Heart left ventricle (tissue), 16 donors: ENCODE measurements at regions of chr4 and their contacts with region 1.

Region 1: GRCh38 chr4:7719354-7720174 is 220.1 kb downstream of the AFAP1 start:
- DNase-seq: peak; percentile 44 to 81 (median 59)
- ATAC-seq: peak; percentile 36 to 83 (median 62)
- H3K4me3 ChIP-seq: no peak overlapping the region
- H3K27ac ChIP-seq: no peak overlapping the region
- H3K4me1 ChIP-seq: peaks cover 0 to 6% (median under 1%) of the 10 kb centered on the region in 12 donors
- H3K27me3 ChIP-seq: peaks cover 0 to 13% (median 0%) of the 10 kb centered on the region in 9 donors
- CTCF ChIP-seq: peak; percentile 73 to 90 (median 84)
- POLR2A ChIP-seq: no peak

Region 2: DNA sequence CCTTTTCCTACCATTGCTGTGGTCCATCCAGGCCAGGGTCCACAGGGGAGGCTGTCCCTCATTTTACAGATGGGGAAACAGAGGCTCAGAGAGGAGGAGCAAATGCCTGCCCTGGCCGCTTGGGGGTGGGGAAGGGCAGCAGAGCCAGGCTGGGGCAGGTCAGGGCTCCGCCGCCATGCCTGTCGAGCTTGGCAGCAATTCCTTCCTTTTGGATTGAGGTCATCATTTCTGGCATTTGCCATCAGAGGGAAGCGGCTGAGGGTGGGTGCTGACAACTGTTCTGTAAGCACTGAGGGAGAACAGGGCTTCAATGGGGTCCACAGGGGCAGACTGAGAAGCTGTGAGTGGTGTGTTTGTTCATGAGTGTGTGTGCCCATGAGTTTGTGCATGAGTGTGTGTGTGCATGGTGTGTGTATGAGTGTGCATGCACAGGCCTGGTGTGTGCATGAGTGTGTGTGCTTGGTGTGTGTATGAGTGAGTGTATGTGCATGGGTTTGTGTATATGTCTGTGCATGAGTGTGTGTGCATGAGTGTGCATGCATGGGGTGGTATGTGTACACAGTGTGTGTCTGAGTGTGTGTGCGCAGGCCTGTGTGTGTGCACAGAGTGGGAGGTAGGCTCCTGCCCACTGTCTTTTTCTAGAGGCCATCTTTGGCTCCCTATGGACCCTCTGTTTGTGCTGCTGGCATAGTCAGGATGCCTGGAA is 412.0 kb before region 1 on chr4:
- intact Hi-C with region 1: loop called in 5 of 10 experiments (anchors 5 to 10 kb)
- DNase-seq: peak in 4 of 5 donors; percentile 29 to 60 (median 41)
- ATAC-seq: peak; percentile 59 to 76 (median 72)
- H3K4me3 ChIP-seq: no peak overlapping the region
- H3K27ac ChIP-seq: no peak overlapping the region
- H3K4me1 ChIP-seq: peaks cover 0 to 21% (median 4%) of the 10 kb centered on the region in 12 donors
- H3K27me3 ChIP-seq: no peaks in the 10 kb centered on the region
- CTCF ChIP-seq: peak in 8 of 12 donors; percentile 9 to 35 (median 22)
- POLR2A ChIP-seq: no peak

Region 3: DNA sequence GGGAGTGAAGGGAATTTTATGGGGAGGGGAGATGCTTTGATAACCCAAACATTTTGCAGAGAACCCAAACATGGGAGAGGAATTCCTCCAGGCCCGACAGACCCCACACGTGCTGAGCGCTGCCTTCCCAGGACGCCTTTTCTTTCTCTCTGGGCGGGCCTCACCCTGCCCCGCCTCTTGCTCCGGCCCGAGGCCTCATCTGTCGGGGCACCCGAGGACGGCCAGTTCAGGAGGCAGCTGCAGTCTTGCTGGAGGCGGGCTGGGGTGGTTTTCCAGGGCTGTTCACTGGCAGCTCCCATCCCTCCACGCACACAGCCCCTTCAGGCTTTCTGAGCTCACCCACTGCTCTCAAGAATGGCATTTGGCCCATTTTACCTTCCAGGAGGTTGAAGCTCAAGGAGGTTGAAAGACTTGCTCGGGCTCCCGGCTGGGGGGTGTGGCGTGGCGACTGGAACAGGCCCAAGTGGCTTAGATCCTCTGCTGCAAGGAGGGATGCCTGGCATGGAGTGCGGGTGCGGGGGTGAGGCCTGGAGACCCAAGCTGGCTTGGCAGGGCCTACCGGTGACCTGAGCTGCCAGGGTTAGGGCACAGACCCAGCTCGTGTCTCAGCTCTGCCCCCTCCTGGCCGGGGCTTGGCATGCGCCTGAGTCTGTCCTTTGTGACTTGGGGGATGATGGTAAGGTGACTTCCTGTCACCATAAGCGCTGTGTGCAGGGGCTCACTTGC is 384.1 kb before region 1 on chr4:
- intact Hi-C with region 1: loop called in 2 of 10 experiments (anchors 5 to 10 kb)
- DNase-seq: peak; percentile 46 to 76 (median 58)
- ATAC-seq: peak in 3 of 4 donors; percentile 52 to 63 (median 60)
- H3K4me3 ChIP-seq: no peak overlapping the region
- H3K27ac ChIP-seq: no peak overlapping the region
- H3K4me1 ChIP-seq: peaks cover 0 to 16% (median 0%) of the 10 kb centered on the region in 12 donors
- H3K27me3 ChIP-seq: no peaks in the 10 kb centered on the region
- CTCF ChIP-seq: peak; percentile 46 to 75 (median 58)
- POLR2A ChIP-seq: no peak

Region 4: DNA sequence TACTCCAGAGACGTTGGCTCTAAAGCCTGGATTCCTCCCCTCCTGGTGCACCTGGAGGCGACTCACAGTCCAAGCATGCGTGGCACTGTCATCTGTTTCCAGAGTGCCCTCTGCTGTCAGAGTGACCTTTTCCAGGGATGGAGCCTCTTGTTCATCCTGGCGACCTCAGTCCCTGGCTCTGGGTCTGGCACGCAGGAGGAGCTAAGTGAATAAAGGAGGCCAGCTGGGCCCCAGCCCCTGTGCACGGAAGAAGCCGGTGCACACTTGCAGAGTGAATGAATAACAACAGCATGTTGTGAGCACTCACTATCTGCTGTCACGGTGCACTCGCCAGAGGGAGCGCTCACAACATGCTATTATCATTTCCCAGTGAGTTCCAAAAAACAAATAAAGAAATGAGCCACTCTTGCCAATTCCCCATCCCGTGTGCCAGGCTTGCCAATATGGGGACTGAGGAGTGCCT is 257.0 kb before region 1 on chr4:
- intact Hi-C with region 1: loop called in 9 of 10 experiments (anchors 2 to 5 kb)
- DNase-seq: peak in 3 of 5 donors; percentile 31 to 62 (median 45)
- ATAC-seq: peak; percentile 47 to 80 (median 69)
- H3K4me3 ChIP-seq: no peak overlapping the region
- H3K27ac ChIP-seq: peak overlapping the region in 1 of 12 donors; percentile 8
- H3K4me1 ChIP-seq: peaks cover 0 to 11% (median 0%) of the 10 kb centered on the region in 12 donors
- H3K27me3 ChIP-seq: peaks cover 0 to 12% (median 0%) of the 10 kb centered on the region in 9 donors
- CTCF ChIP-seq: peak in 10 of 12 donors; percentile 7 to 58 (median 42)
- POLR2A ChIP-seq: no peak

Region 5: DNA sequence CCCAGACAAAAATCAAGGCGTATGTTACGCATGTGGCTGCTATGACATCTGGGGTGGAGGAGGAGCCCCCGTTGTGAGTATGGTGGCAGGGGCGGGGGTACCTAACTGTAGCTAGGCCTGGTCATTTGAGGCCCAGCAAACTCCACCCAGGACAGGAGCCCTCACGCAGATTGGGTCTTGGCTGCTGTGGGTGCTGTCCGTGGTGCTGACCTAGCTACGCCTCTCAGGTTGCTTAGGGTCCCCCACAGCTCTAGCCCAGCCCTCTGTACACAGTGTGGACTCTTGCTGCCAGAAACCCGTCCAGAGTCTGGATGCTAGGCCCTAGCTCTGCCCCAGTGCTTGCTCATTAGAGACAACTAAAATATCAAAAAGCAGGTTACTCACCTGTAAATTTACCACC is 138.1 kb before region 1 on chr4:
- intact Hi-C with region 1: no loop called
- DNase-seq: peak in 2 of 5 donors; percentile 26 to 37
- ATAC-seq: peak in 1 of 4 donors; percentile 39
- H3K4me3 ChIP-seq: no peak overlapping the region
- H3K27ac ChIP-seq: no peak overlapping the region
- H3K4me1 ChIP-seq: no peaks in the 10 kb centered on the region
- H3K27me3 ChIP-seq: no peaks in the 10 kb centered on the region
- CTCF ChIP-seq: no peak
- POLR2A ChIP-seq: no peak